ENCODE measurements at regions of chr17 and their contacts with region 1.

Region 1: DNA sequence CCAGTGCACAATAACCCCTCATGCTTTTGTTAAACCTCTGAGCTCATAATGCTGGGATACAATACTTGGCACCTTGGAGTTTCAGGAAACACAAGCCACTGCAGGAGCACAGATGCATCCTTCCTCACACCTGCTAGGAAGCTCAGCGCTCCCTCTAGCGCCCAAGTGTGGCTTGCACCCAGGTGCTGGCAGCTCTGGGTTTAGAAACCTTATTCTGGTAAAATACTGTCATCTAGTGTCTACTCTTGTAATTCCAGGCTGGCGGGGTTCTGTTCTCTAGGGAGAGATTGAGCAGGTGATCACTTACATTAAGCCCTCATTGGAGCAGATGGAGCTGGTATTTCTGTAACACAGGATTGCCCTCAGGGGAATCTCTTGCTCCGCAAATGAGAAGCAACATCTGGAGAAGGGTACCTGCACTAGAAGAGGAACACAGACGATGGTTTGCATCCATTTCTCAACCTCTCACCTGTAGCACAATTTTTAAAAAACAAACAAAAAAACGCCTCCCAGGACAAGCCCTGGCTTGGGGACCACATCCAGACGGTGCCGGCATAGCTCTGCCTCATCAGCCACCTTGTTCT is 1.5 kb downstream of the CCL1 start:
- DNase-seq: peak; percentile 88
- ATAC-seq: peak; percentile 92
- H3K4me3 Mint-ChIP-seq: no peak overlapping the region
- H3K27ac Mint-ChIP-seq: no peak overlapping the region
- H3K4me1 Mint-ChIP-seq: peaks cover 51% of the 10 kb centered on the region
- H3K27me3 Mint-ChIP-seq: peaks cover 23% of the 10 kb centered on the region

Region 2: DNA sequence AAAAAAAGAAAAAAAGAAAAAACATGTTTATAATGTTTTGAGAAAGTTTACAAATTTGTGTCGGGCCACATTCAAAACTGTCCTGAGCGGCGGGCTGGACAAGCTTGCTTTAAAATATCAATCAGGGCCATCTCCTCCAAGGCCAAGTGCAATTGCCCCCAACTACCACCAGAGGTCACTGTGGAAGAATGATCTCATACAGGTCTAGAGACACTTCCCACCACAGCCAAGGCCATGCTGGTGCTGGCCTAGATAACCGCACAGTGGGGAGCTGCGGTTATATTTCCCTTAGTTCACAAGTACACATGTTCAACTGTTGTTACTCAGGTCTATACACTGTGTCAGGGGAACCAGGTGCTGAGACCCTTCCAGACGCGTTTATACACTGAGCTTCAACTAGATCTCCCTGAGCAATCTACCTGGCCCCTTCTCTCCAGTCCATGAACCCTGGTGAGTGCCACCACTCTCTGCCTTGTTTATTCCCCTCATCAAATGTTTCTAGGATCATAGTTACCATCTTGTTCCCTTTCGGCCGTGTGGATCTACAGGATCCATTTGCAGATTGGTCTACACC is 190.2 kb before region 1 on chr17:
- CTCF ChIA-PET with region 1: interaction called, 53 read pairs
- POLR2A ChIA-PET with region 1: no interaction called
- DNase-seq: peak; percentile 78
- ATAC-seq: peak; percentile 73
- H3K4me3 Mint-ChIP-seq: no peak overlapping the region
- H3K27ac Mint-ChIP-seq: no peak overlapping the region
- H3K4me1 Mint-ChIP-seq: peaks cover 8% of the 10 kb centered on the region
- H3K27me3 Mint-ChIP-seq: peaks cover 6% of the 10 kb centered on the region

Region 3: DNA sequence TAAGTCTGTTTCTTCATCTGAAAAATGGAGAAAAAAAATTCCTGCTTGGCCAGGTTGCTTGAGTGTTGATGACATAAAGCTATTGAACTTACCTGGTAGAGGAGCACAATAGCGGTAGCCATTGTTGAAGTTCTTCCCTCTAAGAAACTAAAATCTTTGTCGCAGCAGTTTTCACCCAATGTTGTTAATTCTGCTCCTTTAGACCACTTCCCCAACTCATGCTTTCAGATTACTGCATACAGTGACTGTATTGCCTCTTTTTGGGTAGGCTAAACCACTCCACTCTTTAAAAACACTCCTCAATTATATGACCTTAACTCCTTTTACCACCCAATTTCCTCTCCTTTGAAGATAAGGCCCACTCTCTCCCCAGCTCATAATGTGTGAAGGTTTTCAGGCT is 142.2 kb before region 1 on chr17:
- CTCF ChIA-PET with region 1: interaction called, 17 read pairs
- POLR2A ChIA-PET with region 1: no interaction called
- DNase-seq: no peak
- ATAC-seq: no peak
- H3K4me3 Mint-ChIP-seq: no peak overlapping the region
- H3K27ac Mint-ChIP-seq: no peak overlapping the region
- H3K4me1 Mint-ChIP-seq: no peaks in the 10 kb centered on the region
- H3K27me3 Mint-ChIP-seq: peaks cover 30% of the 10 kb centered on the region

Region 4: DNA sequence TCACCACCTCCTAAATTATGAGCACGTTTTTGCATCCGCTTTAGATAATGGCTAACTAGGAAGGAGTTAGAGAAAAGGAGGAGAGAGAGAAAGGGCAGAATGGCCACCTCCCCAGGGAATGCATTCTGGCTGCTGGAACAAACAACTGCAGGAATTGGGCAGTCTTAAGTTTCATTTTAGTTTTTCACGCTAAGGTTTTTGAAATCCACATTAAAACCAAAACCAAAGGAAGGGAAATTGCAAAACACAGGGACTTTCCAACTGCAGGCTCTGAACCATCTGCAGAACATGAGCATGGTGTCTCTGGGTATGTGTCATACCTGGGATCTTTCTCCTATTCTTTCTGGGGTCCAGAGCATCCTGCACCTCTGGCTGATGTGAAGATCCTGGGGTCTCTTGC is 54.5 kb before region 1 on chr17:
- CTCF ChIA-PET with region 1: interaction called, 13 read pairs
- POLR2A ChIA-PET with region 1: no interaction called
- DNase-seq: no peak
- ATAC-seq: no peak
- H3K4me3 Mint-ChIP-seq: no peak overlapping the region
- H3K27ac Mint-ChIP-seq: no peak overlapping the region
- H3K4me1 Mint-ChIP-seq: peaks cover 4% of the 10 kb centered on the region
- H3K27me3 Mint-ChIP-seq: peaks cover 5% of the 10 kb centered on the region

Region 5: DNA sequence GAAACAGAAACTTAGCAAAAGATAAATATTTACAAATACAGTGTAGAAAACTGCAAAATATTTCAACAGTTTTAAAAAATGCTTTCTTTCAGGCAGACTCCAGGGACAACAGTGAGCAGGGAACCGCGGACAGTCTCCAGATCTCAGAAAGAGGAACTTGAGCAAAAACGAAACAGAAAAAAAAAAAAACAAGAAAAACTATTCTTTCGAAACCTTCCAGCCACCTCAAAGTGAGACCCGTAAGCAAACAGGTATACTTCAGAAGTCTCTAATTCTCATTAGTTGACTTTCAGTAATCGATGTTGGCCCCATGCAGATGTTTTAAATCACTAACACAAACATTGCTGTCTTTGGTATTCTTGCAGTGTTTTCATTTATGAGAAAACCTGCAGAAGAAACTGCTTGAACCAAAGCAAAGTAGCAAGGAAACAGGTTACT is 17.1 kb after region 1 on chr17:
- CTCF ChIA-PET with region 1: interaction called, 71 read pairs
- POLR2A ChIA-PET with region 1: no interaction called
- DNase-seq: peak; percentile 57
- ATAC-seq: peak; percentile 63
- H3K4me3 Mint-ChIP-seq: peak overlapping the region; percentile 46
- H3K27ac Mint-ChIP-seq: peak overlapping the region; percentile 25
- H3K4me1 Mint-ChIP-seq: peaks cover 38% of the 10 kb centered on the region
- H3K27me3 Mint-ChIP-seq: peaks cover 17% of the 10 kb centered on the region

Region 6: GRCh38 chr17:34412965-34413441 is 51.4 kb after region 1 on chr17:
- CTCF ChIA-PET with region 1: interaction called, 16 read pairs
- POLR2A ChIA-PET with region 1: no interaction called
- DNase-seq: no peak
- ATAC-seq: no peak
- H3K4me3 Mint-ChIP-seq: no peak overlapping the region
- H3K27ac Mint-ChIP-seq: no peak overlapping the region
- H3K4me1 Mint-ChIP-seq: peaks cover 8% of the 10 kb centered on the region
- H3K27me3 Mint-ChIP-seq: peaks cover 44% of the 10 kb centered on the region

Measured in activated CD8-positive, alpha-beta T cell treated with anti-CD3 and anti-CD28 coated beads, Interleukin-2, amount 10 ng/mL, durations not matched to agents 7 days and 5 days (primary cell).